CD4-positive, alpha-beta T cell (primary cell): ENCODE measurements at regions of chr2 and their contacts with region 1.

Region 1: DNA sequence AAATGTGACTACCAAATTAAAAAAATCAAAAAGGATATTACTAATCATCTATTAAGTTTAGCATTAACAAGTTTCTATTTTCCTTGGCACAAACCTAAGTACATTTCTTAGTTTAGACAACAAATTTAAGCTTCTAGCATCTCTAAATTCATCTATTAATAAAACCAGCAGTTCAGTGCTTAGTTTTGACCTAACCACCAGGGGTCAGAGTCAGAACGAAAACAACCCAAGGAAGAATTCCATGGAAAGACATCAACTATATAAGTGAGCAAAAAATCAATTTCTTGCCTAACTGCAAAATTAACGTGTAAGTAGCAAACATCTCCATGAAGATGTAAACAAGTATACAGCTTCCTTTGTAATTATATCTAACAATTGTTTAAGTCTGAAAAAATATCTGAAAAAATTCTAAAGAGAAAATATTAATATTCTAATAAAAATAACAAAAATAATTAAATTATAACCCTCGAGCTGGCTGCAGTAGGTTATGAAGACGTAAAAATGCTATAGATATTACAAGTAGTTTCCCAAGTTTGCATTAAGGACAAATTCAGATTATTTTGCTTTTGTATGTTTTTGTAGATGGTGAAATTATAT is 83.7 kb downstream of the CERKL start:
- DNase-seq: peak in 1 of 14 experiments; percentile 13
- ATAC-seq: no peak
- H3K4me3 ChIP-seq: no peak overlapping the region
- H3K4me3 Mint-ChIP-seq: no peak overlapping the region
- H3K27ac ChIP-seq: no peak overlapping the region
- H3K27ac Mint-ChIP-seq: no peak overlapping the region
- H3K4me1 ChIP-seq: no peaks in the 10 kb centered on the region
- H3K4me1 Mint-ChIP-seq: no peaks in the 10 kb centered on the region
- H3K27me3 ChIP-seq: no peaks in the 10 kb centered on the region
- H3K27me3 Mint-ChIP-seq: peaks cover 5% of the 10 kb centered on the region
- CTCF ChIP-seq: no peak

Region 2: GRCh38 chr2:181715033-181715630 is 141.9 kb after region 1 on chr2:
- CTCF ChIA-PET with region 1: interaction called, 7 read pairs
- POLR2A ChIA-PET with region 1: no interaction called
- intact Hi-C with region 1: loop called (anchors 2 to 10 kb)
- DNase-seq: peak; percentile 30 to 86 (median 60)
- ATAC-seq: peak; percentile 80
- H3K4me3 ChIP-seq: no peak overlapping the region
- H3K4me3 Mint-ChIP-seq: no peak overlapping the region
- H3K27ac ChIP-seq: no peak overlapping the region
- H3K27ac Mint-ChIP-seq: no peak overlapping the region
- H3K4me1 ChIP-seq: no peaks in the 10 kb centered on the region
- H3K4me1 Mint-ChIP-seq: no peaks in the 10 kb centered on the region
- H3K27me3 ChIP-seq: no peaks in the 10 kb centered on the region
- H3K27me3 Mint-ChIP-seq: no peaks in the 10 kb centered on the region
- CTCF ChIP-seq: peak; percentile 72